ENCODE measurements at regions of chr9 and their contacts with region 1.

Region 1: DNA sequence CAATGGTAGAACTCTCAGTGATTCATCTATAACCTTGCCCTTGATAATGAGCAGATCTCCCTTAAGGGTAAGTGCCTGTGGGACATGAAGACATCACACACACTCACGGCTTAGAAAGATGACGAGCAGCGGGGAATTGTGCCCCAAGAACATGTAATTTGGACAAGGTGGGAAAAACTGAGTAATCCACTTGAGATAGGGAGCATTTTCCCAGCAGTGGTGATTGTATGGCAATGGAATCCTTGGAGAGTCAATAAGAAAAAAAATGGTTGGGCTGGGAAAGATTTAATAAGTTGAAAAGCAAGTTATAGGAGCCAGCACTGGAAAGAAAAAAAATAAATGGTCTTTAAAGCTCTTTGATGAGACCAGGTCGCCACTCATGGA is 193.1 kb downstream of the GLIS3 start:
- DNase-seq: no peak
- H3K4me3 Mint-ChIP-seq: peak overlapping the region; percentile 34
- H3K27ac Mint-ChIP-seq: peak overlapping the region; percentile 97
- H3K4me1 Mint-ChIP-seq: peaks cover 65% of the 10 kb centered on the region
- H3K27me3 Mint-ChIP-seq: no peaks in the 10 kb centered on the region
- CTCF ChIP-seq: no peak

Region 2: GRCh38 chr9:3980771-3981170 is 126.0 kb before region 1 on chr9:
- CTCF ChIA-PET with region 1: no interaction called
- intact Hi-C with region 1: no loop called
- DNase-seq: no peak
- H3K4me3 Mint-ChIP-seq: no peak overlapping the region
- H3K27ac Mint-ChIP-seq: no peak overlapping the region
- H3K4me1 Mint-ChIP-seq: peaks cover 8% of the 10 kb centered on the region
- H3K27me3 Mint-ChIP-seq: no peaks in the 10 kb centered on the region
- CTCF ChIP-seq: no peak

Region 3: GRCh38 chr9:4147476-4148230 is 40.9 kb after region 1 on chr9:
- CTCF ChIA-PET with region 1: interaction called, 4 read pairs
- intact Hi-C with region 1: loop called (anchors 5 kb)
- DNase-seq: peak; percentile 29
- H3K4me3 Mint-ChIP-seq: peak overlapping the region; percentile 29
- H3K27ac Mint-ChIP-seq: peak overlapping the region; percentile 61
- H3K4me1 Mint-ChIP-seq: peaks cover 56% of the 10 kb centered on the region
- H3K27me3 Mint-ChIP-seq: no peaks in the 10 kb centered on the region
- CTCF ChIP-seq: no peak

Region 4: GRCh38 chr9:4160249-4160648 is 53.5 kb after region 1 on chr9:
- CTCF ChIA-PET with region 1: no interaction called
- intact Hi-C with region 1: no loop called
- DNase-seq: no peak
- H3K4me3 Mint-ChIP-seq: no peak overlapping the region
- H3K27ac Mint-ChIP-seq: no peak overlapping the region
- H3K4me1 Mint-ChIP-seq: peaks cover 23% of the 10 kb centered on the region
- H3K27me3 Mint-ChIP-seq: no peaks in the 10 kb centered on the region
- CTCF ChIP-seq: no peak